Ovary (tissue), 10 donors: ENCODE measurements at regions of chr13 and their contacts with region 1.

Region 1: DNA sequence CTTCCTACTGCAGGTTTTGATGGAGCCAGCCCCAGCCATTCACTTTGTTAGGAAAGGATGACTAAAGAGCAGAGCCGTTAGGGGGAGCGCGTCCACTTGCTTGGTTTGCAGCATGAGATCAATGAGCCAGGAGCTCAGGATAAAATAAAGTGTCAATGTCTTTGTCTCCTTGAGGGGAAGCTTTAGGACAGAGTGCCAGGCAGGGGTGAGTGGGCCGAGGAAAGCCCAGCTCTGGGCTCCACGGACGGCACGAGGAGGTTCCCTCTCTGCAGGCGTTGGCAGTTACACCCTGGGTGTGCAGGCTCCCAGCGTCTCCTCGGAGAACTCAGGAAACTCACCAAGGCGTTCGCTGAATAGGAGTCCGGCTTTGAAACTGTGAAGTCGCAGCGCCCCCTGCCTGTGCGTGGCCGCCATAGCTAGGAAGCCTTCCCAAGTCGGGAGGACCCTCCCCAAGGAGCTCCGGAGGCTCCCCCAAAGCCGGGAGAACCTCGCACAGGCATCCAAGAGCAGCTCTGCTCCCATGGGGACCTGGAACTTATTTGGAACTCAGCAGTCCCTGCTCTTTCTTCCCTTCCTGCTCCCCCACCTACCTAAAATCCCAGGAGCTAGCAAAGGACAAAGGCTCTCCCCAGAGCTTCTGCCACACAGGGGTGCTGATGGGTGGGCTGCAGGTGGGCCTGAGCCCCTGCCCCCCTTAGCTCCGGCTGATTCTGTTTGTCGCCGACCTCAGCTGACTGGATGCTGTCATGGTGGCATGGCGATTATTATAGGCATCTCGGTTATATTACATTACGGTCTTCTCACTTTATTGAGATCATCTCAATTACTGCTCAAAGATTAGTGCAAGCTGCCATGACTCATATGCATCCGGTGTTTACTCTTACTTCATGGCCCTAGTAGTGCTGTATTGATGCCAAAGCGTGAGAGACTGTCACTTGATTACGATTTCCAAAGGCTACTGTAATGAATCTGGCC is 34.4 kb downstream of the GSX1 start:
- DNase-seq: peak; percentile 57 to 85 (median 78)
- H3K4me3 ChIP-seq: no peak overlapping the region
- H3K27ac ChIP-seq: no peak overlapping the region
- H3K4me1 ChIP-seq: no peaks in the 10 kb centered on the region
- H3K27me3 ChIP-seq: no peaks in the 10 kb centered on the region
- CTCF ChIP-seq: peak; percentile 65 to 80 (median 67)
- EP300 ChIP-seq: no peak
- POLR2A ChIP-seq: no peak

Region 2: GRCh38 chr13:26946684-26947343 is 879.9 kb before region 1 on chr13:
- intact Hi-C with region 1: loop called in 1 of 4 experiments (anchors 10 kb)
- DNase-seq: no peak
- H3K4me3 ChIP-seq: no peak overlapping the region
- H3K27ac ChIP-seq: no peak overlapping the region
- H3K4me1 ChIP-seq: peaks cover 9% of the 10 kb centered on the region
- H3K27me3 ChIP-seq: no peaks in the 10 kb centered on the region
- CTCF ChIP-seq: peak; percentile 54 to 82 (median 67)
- EP300 ChIP-seq: no peak
- POLR2A ChIP-seq: no peak

Region 3: GRCh38 chr13:27226991-27227390 is 599.7 kb before region 1 on chr13:
- intact Hi-C with region 1: no loop called
- DNase-seq: no peak
- H3K4me3 ChIP-seq: no peak overlapping the region
- H3K27ac ChIP-seq: no peak overlapping the region
- H3K4me1 ChIP-seq: no peaks in the 10 kb centered on the region
- H3K27me3 ChIP-seq: no peaks in the 10 kb centered on the region
- CTCF ChIP-seq: no peak
- EP300 ChIP-seq: no peak
- POLR2A ChIP-seq: no peak

Region 4: DNA sequence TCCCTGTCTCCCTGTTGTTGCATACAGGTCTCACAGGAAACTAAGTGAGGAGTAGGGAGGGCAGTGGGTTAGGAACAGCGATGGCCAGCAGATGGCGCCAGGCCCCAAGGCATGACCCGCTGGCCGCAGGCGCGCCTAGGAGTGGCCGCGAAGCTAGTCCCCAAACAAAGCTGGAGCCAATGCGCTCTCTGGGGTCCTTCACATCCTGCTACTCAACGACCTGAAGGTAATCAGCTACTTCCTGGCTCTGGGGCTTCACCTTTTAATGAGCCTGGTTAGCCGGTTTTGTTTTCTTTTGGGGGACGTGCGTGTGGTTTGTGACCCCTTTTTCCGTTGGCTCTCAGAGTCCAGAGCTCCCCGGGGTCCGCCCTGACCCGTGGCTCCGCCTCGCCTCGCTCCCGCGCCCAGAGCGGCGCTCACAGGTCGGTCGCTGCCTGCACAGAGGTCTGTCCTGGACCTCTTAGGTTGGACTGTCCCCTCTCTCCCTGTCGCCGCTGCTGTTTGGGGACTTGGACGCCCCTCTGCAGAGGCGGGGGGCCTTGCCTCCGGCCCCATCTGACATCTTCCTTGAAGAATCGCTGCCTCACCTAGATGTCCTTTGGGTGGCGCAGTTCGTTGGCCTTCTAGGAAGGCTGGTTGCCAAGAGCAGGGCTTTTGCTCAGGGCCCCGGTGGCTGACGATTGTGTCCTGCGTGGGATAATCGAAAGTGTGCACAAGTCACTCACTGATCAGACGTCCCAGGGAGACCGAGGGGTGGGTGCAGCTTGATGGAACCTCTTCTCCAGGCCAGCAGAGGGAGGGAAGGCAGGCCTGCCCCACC is 464.4 kb before region 1 on chr13:
- intact Hi-C with region 1: loop called in 1 of 4 experiments (anchors 2 kb)
- DNase-seq: peak; percentile 77 to 88 (median 86)
- H3K4me3 ChIP-seq: peak overlapping the region; percentile 24
- H3K27ac ChIP-seq: no peak overlapping the region
- H3K4me1 ChIP-seq: no peaks in the 10 kb centered on the region
- H3K27me3 ChIP-seq: no peaks in the 10 kb centered on the region
- CTCF ChIP-seq: peak; percentile 80 to 91 (median 83)
- EP300 ChIP-seq: no peak
- POLR2A ChIP-seq: no peak

Region 5: GRCh38 chr13:27533155-27533643 is 293.5 kb before region 1 on chr13:
- intact Hi-C with region 1: loop called (anchors 5 to 10 kb)
- DNase-seq: peak; percentile 64 to 87 (median 82)
- H3K4me3 ChIP-seq: no peak overlapping the region
- H3K27ac ChIP-seq: no peak overlapping the region
- H3K4me1 ChIP-seq: no peaks in the 10 kb centered on the region
- H3K27me3 ChIP-seq: no peaks in the 10 kb centered on the region
- CTCF ChIP-seq: peak; percentile 51 to 70 (median 60)
- EP300 ChIP-seq: no peak
- POLR2A ChIP-seq: no peak

Region 6: DNA sequence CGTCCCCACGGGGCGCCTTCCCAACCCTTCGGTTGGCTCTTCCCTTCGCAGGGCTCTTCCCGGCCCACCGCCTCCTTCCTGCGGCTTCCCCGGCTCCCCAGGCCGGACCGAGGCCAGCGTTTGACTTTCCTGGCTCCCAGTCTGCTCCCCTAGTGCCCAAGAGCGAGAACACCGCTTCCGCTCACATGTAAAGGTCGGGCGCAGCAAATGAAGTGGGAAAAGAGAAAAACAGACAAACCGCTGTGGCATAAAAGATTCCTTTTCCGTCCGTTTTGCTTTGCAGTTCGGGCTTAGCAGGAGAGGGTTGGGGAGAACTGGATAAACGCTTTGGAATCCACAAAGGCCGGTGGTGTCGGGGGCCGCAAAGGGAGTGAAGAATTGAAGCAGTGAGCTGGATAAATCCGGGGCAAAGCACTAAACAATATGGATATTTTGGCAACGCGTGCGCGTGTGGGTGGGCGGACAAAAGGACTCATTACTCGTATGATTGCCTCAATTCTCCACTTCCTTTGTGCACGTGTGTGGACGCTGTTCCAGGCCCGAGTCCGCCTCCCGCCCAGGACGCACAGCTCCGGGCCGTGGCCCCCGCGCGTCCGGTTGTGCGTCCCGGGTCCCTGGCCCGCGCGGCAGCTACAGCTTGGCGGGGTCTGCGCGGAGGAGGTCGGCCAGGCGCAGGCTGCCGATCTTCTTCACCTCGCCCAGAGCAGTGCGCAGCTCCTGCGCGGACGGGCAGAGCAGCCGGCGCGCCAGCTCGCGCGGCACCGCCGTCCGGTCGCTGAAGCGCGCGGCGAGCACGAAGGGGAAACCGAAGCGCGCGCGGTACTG is 151.0 kb after region 1 on chr13:
- intact Hi-C with region 1: loop called in 1 of 4 experiments (anchors 10 kb)
- DNase-seq: no peak
- H3K4me3 ChIP-seq: peak overlapping the region; percentile 8
- H3K27ac ChIP-seq: no peak overlapping the region
- H3K4me1 ChIP-seq: no peaks in the 10 kb centered on the region
- H3K27me3 ChIP-seq: no peaks in the 10 kb centered on the region
- CTCF ChIP-seq: no peak
- EP300 ChIP-seq: no peak
- POLR2A ChIP-seq: no peak